ENCODE measurements at regions of chr16 and their contacts with region 1.

Region 1: DNA sequence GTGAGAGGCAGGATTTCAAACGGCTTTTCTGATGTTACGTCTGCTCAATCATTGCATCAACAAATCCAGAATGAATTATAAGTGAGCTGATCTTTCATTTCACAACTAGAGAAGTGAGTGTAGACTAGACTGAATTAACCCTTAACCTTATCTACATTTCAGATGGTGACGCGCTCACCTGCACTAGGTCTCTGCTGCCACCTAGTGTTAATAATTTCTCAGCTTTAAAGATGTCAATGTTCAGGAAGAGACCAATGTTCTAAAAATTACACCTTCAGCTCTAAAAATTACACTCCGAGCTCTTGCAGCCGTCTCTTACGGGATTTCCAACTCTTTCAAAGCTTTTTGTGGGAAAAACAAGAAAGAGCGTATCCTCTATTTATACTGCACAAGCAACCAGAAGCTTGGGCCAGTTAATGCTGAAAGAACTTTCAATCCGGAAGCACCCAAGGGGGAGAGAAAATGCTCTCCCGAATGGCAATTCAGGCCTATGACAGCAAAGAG is 88.2 kb upstream of the FA2H start:
- DNase-seq: no peak
- ATAC-seq: no peak
- H3K4me3 ChIP-seq: no peak overlapping the region
- H3K27ac ChIP-seq: no peak overlapping the region
- H3K4me1 ChIP-seq: no peaks in the 10 kb centered on the region
- H3K27me3 ChIP-seq: no peaks in the 10 kb centered on the region

Region 2: GRCh38 chr16:74709441-74709877 is 153.3 kb before region 1 on chr16:
- intact Hi-C with region 1: loop called (anchors 2 kb)
- DNase-seq: peak; percentile 79 to 92
- ATAC-seq: peak; percentile 90
- H3K4me3 ChIP-seq: no peak overlapping the region
- H3K27ac ChIP-seq: no peak overlapping the region
- H3K4me1 ChIP-seq: no peaks in the 10 kb centered on the region
- H3K27me3 ChIP-seq: no peaks in the 10 kb centered on the region

Region 3: GRCh38 chr16:74813109-74813641 is 49.6 kb before region 1 on chr16:
- intact Hi-C with region 1: loop called in 1 of 2 experiments (anchors 1 kb)
- DNase-seq: peak; percentile 73 to 89
- ATAC-seq: peak; percentile 88
- H3K4me3 ChIP-seq: no peak overlapping the region
- H3K27ac ChIP-seq: no peak overlapping the region
- H3K4me1 ChIP-seq: no peaks in the 10 kb centered on the region
- H3K27me3 ChIP-seq: no peaks in the 10 kb centered on the region

Region 4: DNA sequence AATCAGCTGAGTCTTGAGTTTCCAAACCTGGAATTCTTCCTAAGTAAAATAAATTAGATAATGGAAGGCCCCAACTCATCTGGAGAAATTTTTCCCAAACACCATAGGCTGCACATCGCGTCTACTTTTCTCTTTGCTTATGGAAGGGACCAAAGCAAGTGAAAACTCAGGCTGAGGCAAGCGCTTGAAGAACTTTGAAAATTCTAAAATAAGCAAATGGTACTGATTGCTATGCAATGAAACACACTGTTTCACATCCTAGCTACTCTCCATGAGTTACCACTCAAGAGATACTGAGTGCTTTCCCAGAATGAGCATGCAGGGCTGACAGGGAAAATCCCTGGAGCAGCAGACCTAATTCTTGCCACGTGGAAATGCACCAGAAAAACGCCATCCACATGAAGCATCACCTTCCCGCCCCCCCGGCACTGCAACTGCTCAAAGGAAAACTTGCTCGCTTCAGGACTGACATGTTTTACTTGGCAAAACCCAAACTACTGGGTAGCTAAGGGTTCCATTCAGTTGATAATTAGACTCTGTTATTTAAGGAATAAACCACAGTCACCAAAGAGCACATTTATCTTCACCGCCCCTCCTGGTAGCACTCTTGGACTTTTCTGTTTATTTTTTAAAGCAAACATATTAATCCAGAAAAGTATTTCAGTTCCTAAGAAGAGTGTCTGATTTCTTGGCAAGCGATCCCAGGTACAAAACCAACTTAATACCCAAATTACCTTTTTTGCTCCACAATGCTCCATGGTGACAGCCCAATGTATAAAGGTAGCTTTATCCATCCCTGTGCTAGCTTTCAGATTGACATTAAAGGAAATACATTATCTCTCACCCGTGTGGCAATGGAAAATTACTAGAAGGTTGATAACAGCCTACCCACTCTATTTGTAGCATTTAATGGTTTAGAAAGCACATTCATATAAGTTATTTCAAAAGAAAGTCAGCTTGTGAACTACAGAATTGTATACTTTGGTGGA is 59.7 kb after region 1 on chr16:
- intact Hi-C with region 1: no loop called
- DNase-seq: no peak
- ATAC-seq: no peak
- H3K4me3 ChIP-seq: no peak overlapping the region
- H3K27ac ChIP-seq: no peak overlapping the region
- H3K4me1 ChIP-seq: no peaks in the 10 kb centered on the region
- H3K27me3 ChIP-seq: no peaks in the 10 kb centered on the region